ENCODE measurements at regions of chr10 and their contacts with region 1.

Region 1: DNA sequence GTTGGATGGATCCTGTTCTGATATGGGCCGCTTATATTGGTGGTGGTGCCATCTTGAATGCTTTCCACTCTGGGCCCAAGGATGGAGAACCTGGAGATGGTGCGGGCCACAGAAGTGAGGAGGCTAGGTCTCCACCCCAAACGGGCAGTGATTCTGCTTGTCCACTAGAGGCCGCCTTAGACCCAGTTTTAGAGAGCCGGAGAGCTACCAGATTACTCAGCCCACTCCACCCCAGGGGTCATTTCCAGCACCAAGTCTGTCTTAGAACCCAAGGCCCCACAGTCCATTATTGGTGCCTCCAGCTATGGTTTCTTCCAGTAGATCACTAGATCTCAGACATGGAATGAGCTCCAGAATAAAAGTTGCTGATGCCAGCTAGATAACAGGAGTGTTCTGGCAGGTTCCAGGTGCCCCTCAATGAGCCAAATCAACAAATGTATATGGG is 11.8 kb upstream of the CAMK2G start:
- DNase-seq: no peak
- ATAC-seq: peak; percentile 67
- H3K4me3 ChIP-seq: no peak overlapping the region
- H3K27ac ChIP-seq: peak overlapping the region; percentile 95
- H3K4me1 ChIP-seq: peaks cover 44 to 68% of the 10 kb centered on the region in 2 experiments
- H3K27me3 ChIP-seq: no peaks in the 10 kb centered on the region
- CTCF ChIP-seq: peak in 2 of 3 experiments; percentile 83 to 94; a peak in 4 of 6 replicates
- POLR2A ChIP-seq: no peak
- RAD21 ChIP-seq: no peak

Region 2: DNA sequence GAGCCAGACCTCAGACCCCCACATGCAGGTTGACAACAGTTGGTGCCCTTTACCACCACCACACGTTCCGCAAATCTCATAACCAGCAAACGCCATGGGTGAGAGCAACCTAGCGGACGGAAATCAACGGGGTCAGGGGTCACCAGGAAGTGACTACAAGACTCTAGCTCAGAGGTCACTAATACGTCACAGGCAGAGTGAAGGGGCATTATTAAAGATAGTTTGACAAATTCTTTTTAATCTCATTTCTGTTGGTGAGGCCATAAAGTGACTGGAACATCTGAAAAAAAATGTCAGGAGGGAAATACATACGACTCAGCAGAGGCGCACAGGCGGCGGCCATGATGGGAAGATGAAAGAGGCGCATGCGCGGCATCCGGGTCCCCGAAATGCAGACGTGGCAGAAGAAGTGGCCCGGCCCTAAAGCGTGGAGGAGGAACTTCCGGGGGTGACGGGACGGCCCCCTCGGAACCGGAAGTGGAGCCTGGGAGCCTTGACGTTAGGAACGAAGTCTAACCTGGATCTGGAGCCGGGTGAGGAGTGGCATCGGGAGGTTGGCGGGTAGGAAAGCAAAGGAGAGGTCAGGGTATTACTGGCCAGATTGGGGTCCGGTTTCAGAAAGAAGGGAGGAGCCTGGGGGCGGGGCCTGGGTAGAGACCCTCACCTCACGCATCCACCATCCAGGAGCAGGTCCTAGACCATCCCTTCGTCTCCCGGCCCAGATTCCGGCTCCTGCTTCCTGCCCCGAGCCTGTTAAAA is 142.0 kb before region 1 on chr10 and contains the start of gene SEC24C:
- CTCF ChIA-PET with region 1: no interaction called
- POLR2A ChIA-PET with region 1: no interaction called
- RAD21 ChIA-PET with region 1: no interaction called
- intact Hi-C with region 1: no loop called
- DNase-seq: peak; percentile 93
- ATAC-seq: peak; percentile 89
- H3K4me3 ChIP-seq: peak within 1 kb of the TSS; percentile 84 to 98
- H3K27ac ChIP-seq: peak within 1 kb of the TSS; percentile 79
- H3K4me1 ChIP-seq: peaks cover 2 to 22% of the 10 kb centered on the region in 2 experiments; a peak in 3 of 4 replicates
- H3K27me3 ChIP-seq: no peaks in the 10 kb centered on the region
- CTCF ChIP-seq: no peak
- POLR2A ChIP-seq: peak; percentile 78
- RAD21 ChIP-seq: no peak
- total RNA-seq, gene SEC24C: 60.9 TPM

Region 3: DNA sequence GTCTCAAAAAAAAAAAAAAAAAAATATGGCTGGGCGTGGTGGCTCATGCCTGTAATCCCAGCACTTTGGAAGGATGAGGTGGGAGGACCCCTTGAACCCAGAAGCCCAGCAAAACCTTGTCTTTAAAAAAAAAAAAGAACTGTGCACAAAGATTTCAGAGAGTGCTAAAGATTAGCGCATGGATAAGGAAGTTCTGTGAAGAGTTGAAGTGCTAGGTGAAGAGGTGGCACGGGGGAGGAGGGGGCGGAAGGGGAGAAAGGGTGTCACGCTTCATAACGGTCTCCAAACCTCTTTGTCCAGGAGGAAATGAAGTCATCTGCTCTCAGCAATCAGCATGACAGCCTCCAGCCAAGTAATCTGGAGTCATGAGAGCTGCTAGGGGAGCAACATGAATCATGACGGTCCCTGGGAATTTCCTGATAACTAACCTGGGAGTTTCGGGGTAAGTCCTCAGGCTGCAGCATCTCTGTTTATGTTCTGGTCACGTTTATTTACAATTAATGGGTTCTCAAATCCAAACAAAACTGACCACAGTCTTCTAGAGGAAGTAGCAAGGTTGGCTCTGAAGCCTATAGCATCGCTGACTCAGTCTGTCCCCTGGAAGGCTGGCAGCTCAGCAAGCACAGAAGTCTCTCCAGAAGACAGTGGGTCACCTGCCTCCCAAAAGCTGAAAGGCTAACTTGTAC is 22.9 kb after region 1 on chr10:
- CTCF ChIA-PET with region 1: interaction called, 21 read pairs
- POLR2A ChIA-PET with region 1: interaction called, 98 read pairs
- RAD21 ChIA-PET with region 1: interaction called, 8 to 9 read pairs
- intact Hi-C with region 1: loop called (anchors 2 kb)
- DNase-seq: no peak
- ATAC-seq: no peak
- H3K4me3 ChIP-seq: peak overlapping the region; percentile 14 to 23
- H3K27ac ChIP-seq: peak overlapping the region; percentile 92
- H3K4me1 ChIP-seq: peaks cover 56 to 73% of the 10 kb centered on the region in 2 experiments
- H3K27me3 ChIP-seq: no peaks in the 10 kb centered on the region
- CTCF ChIP-seq: no peak
- POLR2A ChIP-seq: no peak
- RAD21 ChIP-seq: no peak

Region 4: GRCh38 chr10:73931767-73932619 is 45.9 kb after region 1 on chr10:
- CTCF ChIA-PET with region 1: interaction called, 142 read pairs
- POLR2A ChIA-PET with region 1: interaction called, 59 read pairs
- RAD21 ChIA-PET with region 1: interaction called, 4 to 9 read pairs
- intact Hi-C with region 1: loop called (anchors 2 kb)
- DNase-seq: peak; percentile 91
- ATAC-seq: peak; percentile 94
- H3K4me3 ChIP-seq: peak overlapping the region; percentile 25 to 49
- H3K27ac ChIP-seq: peak overlapping the region; percentile 99
- H3K4me1 ChIP-seq: peaks cover 35 to 60% of the 10 kb centered on the region in 2 experiments
- H3K27me3 ChIP-seq: no peaks in the 10 kb centered on the region
- CTCF ChIP-seq: no peak
- POLR2A ChIP-seq: no peak
- RAD21 ChIP-seq: no peak; the same call in none of the 2 replicates

Region 5: DNA sequence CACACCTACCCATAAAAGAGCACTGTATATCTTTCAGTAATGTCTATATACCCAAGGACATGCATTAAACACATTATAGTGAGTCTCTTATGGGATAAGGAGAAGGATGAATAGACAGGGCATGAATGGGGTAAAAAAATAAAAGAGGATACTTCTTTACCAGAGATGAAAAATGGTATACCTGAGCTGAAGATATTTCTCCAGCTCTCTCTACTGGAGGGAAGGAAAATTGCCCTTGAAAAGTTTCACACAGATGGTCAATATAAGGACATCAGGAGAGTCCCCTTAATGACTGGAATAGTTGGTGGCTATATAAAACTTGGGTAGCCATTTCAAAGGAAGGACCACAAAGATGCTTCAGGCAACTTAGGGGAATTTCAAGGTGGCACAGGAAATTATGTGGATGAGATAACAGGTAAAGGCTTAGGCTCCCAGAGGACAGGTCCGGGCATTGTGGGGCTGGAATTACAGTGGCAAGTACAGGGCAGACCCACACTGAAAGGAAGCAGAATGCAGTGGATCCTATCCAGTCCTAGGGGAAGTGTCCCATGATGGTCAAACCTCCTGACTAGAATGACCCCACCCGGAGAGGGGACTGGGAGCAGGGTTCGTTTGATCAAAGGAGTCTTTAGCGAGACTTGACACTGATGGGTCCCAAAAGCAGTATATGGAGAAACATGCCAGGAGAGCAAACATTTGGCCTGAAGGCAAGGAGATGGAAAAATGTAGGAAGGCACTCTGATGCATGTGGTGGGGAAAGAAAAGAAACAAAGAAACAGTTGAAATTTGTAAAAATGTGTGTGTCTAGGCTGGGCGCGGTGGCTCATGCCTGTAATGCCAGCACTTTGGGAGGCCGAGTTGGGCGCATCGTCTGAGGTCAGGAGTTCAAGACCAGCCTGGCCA is 60.4 kb after region 1 on chr10:
- CTCF ChIA-PET with region 1: interaction called, 142 read pairs
- POLR2A ChIA-PET with region 1: interaction called, 37 read pairs
- RAD21 ChIA-PET with region 1: interaction called, 41 to 47 read pairs
- intact Hi-C with region 1: no loop called
- DNase-seq: no peak
- ATAC-seq: peak; percentile 60
- H3K4me3 ChIP-seq: no peak overlapping the region
- H3K27ac ChIP-seq: no peak overlapping the region
- H3K4me1 ChIP-seq: peaks cover 0 to 4% of the 10 kb centered on the region in 2 experiments; a peak in 2 of 4 replicates
- H3K27me3 ChIP-seq: no peaks in the 10 kb centered on the region
- CTCF ChIP-seq: peak in 1 of 3 experiments; percentile 22; a peak in 2 of 6 replicates
- POLR2A ChIP-seq: no peak
- RAD21 ChIP-seq: peak; percentile 42; the same call in 1 of the 2 replicates

Region 6: DNA sequence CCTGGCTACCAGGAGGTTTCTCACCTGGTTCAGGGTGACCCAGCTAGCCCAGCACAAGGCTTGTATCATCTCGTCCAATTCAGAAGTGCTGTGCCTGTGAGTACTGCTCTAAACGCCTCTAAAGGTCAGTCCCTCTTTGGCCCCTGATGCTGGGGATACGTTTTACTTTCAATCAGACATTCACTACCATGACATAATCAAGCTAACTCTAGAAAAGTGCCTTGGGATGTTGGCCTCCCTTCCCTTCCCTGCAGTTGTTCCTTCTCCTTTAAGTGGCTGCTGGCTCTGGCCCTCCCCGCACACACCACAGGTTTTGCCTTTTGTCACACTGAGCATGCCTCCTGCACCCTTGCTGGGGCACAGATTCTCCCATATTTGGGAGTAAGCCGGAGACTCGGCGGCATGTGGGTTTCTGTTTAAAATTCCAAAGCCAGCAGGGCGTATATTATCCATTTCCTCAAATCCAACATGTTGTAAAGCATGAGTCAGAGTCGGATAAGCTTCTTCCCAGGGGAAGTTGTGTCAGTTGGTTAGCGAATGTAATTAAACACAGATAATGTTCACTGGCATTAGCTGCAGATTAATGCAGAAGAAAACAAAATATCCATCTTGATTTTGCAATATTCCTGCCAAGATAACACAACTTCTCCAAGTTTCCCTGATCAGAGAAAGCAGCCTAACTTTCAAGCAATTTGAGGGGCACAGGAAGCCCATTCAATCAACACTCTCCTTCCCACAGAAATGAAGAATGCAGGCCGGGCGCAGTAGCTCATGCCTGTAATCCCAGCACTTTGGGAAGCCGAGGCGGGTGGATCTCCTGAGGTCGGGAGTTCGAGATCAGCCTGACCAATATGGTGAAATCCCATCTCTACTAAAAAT is 80.0 kb after region 1 on chr10:
- CTCF ChIA-PET with region 1: interaction called, 7 read pairs
- POLR2A ChIA-PET with region 1: interaction called, 36 read pairs
- RAD21 ChIA-PET with region 1: interaction called in 1 of 2 experiments, 4 read pairs
- intact Hi-C with region 1: loop called (anchors 1 kb)
- DNase-seq: peak; percentile 99
- ATAC-seq: peak; percentile 91
- H3K4me3 ChIP-seq: peak overlapping the region; percentile 13 to 31
- H3K27ac ChIP-seq: peak overlapping the region; percentile 100
- H3K4me1 ChIP-seq: peaks cover 44 to 69% of the 10 kb centered on the region in 2 experiments
- H3K27me3 ChIP-seq: no peaks in the 10 kb centered on the region
- CTCF ChIP-seq: no peak
- POLR2A ChIP-seq: no peak
- RAD21 ChIP-seq: 0 out of 2 replicates have a peak, but pooled peaks have one; percentile 36

Region 7: GRCh38 chr10:74081192-74081803 is 195.2 kb after region 1 on chr10:
- CTCF ChIA-PET with region 1: interaction called, 61 read pairs
- POLR2A ChIA-PET with region 1: interaction called, 4 read pairs
- RAD21 ChIA-PET with region 1: interaction called, 3 to 9 read pairs
- intact Hi-C with region 1: loop called (anchors 1 kb)
- DNase-seq: peak; percentile 43
- ATAC-seq: peak; percentile 82
- H3K4me3 ChIP-seq: no peak overlapping the region
- H3K27ac ChIP-seq: peak overlapping the region; percentile 64; the same call in 1 of the 2 replicates
- H3K4me1 ChIP-seq: peaks cover 32 to 48% of the 10 kb centered on the region in 2 experiments
- H3K27me3 ChIP-seq: no peaks in the 10 kb centered on the region
- CTCF ChIP-seq: peak; percentile 59 to 81 (median 80); a peak in 5 of 6 replicates
- POLR2A ChIP-seq: no peak
- RAD21 ChIP-seq: peak; percentile 84

Region 8: GRCh38 chr10:74234569-74234968 is 348.5 kb after region 1 on chr10:
- CTCF ChIA-PET with region 1: interaction called, 3 read pairs
- POLR2A ChIA-PET with region 1: no interaction called
- RAD21 ChIA-PET with region 1: no interaction called
- intact Hi-C with region 1: loop called (anchors 5 kb)
- DNase-seq: no peak
- ATAC-seq: no peak
- H3K4me3 ChIP-seq: no peak overlapping the region
- H3K27ac ChIP-seq: no peak overlapping the region
- H3K4me1 ChIP-seq: peaks cover 29 to 40% of the 10 kb centered on the region in 2 experiments
- H3K27me3 ChIP-seq: no peaks in the 10 kb centered on the region
- CTCF ChIP-seq: peak; percentile 12 to 69 (median 56); a peak in 4 of 6 replicates
- POLR2A ChIP-seq: no peak
- RAD21 ChIP-seq: peak; percentile 78

Measured in HCT116 (cell line).